ENCODE measurements at regions of chr18 and their contacts with region 1.

Region 1: GRCh38 chr18:5237723-5238370 is 40.8 kb upstream of the AKAIN1 start:
- DNase-seq: peak; percentile 89
- ATAC-seq: peak; percentile 93
- H3K4me3 Mint-ChIP-seq: peak overlapping the region; percentile 94
- H3K27ac Mint-ChIP-seq: peak overlapping the region; percentile 93
- H3K4me1 Mint-ChIP-seq: peaks cover 44% of the 10 kb centered on the region
- H3K27me3 Mint-ChIP-seq: peaks cover 1% of the 10 kb centered on the region
- CTCF ChIP-seq: no peak

Region 2: DNA sequence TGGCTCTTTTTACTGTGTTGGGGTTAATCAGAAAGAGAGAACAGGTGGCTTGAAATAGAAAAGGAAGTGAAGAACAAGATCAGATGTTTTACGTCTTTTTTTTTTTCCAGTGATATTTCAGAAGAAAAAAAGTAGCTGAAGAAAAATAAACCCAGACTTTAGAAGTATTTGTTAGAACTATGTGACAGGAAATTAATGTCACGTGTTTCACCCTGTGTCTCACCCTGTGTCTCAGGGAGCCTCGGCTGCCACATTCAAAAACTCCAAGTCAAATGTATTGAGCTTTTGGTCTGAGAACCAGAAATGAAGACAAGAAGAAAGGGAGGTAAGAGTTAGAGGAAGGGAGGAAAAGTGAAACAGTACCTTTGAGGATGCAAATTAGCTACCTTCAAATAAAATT is 78.8 kb before region 1 on chr18:
- CTCF ChIA-PET with region 1: interaction called, 5 read pairs
- POLR2A ChIA-PET with region 1: interaction called, 5 read pairs
- intact Hi-C with region 1: loop called (anchors 5 kb)
- DNase-seq: peak; percentile 18
- ATAC-seq: peak; percentile 57
- H3K4me3 Mint-ChIP-seq: peak overlapping the region; percentile 9
- H3K27ac Mint-ChIP-seq: peak overlapping the region; percentile 80
- H3K4me1 Mint-ChIP-seq: peaks cover 30% of the 10 kb centered on the region
- H3K27me3 Mint-ChIP-seq: peaks cover 1% of the 10 kb centered on the region
- CTCF ChIP-seq: no peak

Region 3: DNA sequence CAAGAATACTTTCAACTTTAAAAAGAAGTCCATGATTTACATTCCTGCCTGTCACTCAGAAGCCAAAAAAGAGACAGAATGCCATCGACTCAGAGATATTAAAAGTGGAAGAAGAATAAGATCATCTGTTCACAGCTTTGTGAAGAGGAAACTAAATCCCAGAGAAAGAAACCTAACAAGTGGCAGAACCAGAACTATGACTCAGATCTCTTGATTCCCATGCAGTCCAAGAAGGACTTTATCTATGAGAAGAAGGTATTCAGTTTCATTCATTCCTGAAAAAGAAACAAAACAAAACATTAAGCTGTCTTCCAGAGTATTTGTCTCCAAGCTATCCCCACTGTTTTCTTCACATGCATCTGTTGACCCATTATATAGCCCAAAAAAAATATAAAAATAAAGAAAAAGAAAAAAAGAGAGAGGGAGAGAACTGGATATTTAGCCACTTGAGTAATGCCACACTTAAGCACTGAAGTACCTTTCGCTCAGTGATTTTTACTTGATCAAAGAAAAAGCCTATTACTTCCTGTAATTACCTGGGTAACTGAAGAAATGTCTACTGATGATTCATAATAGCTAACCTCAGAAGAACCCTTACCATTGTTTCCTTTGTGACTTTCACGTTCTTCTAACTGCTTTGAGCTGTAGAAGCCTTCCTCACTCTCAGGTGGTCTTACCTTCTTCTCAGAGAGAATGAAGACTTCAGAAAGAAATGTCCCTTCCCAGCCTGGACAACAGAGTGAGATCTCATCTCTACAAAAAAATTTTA is 23.1 kb before region 1 on chr18:
- CTCF ChIA-PET with region 1: no interaction called
- POLR2A ChIA-PET with region 1: interaction called, 10 read pairs
- intact Hi-C with region 1: no loop called
- DNase-seq: no peak
- ATAC-seq: peak; percentile 74
- H3K4me3 Mint-ChIP-seq: no peak overlapping the region
- H3K27ac Mint-ChIP-seq: peak overlapping the region; percentile 3
- H3K4me1 Mint-ChIP-seq: peaks cover 10% of the 10 kb centered on the region
- H3K27me3 Mint-ChIP-seq: peaks cover 3% of the 10 kb centered on the region
- CTCF ChIP-seq: no peak

Region 4: DNA sequence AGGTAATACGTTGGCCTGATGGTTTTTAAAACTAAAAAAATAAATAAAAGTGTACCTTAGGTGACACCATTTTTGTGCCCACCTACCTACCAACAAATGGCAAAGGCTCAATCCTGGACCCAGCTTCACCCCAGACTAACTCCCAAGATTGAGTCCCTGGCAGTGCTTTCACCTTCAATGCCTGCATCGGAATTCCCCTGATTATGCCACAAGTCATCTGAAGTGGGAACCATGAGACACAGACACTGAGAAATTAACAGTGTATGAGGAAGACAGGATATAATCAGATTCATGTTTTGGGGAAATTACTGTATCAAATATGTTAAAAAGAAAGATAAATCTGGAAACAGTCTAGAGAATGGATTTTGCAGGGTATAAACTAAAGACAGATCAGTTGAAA is 16.1 kb after region 1 on chr18:
- CTCF ChIA-PET with region 1: no interaction called
- POLR2A ChIA-PET with region 1: interaction called, 14 read pairs
- intact Hi-C with region 1: no loop called
- DNase-seq: no peak
- ATAC-seq: no peak
- H3K4me3 Mint-ChIP-seq: no peak overlapping the region
- H3K27ac Mint-ChIP-seq: no peak overlapping the region
- H3K4me1 Mint-ChIP-seq: no peaks in the 10 kb centered on the region
- H3K27me3 Mint-ChIP-seq: peaks cover 3% of the 10 kb centered on the region
- CTCF ChIP-seq: no peak

Region 5: DNA sequence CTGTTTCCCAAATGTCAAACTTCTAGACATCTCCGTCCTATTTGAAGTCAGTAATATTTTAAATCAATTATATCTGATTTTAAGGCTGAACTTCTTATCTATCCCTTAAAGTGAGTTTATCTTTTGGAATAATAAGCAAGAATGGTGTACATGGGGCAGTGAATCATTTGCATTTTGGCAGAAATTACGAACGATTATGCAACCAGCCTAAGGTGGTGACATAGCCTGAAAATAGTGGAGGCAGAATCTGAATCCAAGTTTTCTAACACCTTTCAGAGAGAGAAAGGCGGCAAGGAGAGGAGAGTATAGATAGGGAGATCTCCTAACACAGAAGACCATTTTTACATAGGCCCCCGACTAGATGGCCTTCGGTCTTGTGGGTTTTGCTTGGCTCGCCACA is 47.0 kb after region 1 on chr18:
- CTCF ChIA-PET with region 1: no interaction called
- POLR2A ChIA-PET with region 1: interaction called, 10 read pairs
- intact Hi-C with region 1: no loop called
- DNase-seq: no peak
- ATAC-seq: no peak
- H3K4me3 Mint-ChIP-seq: no peak overlapping the region
- H3K27ac Mint-ChIP-seq: no peak overlapping the region
- H3K4me1 Mint-ChIP-seq: peaks cover 34% of the 10 kb centered on the region
- H3K27me3 Mint-ChIP-seq: no peaks in the 10 kb centered on the region
- CTCF ChIP-seq: no peak

Region 6: GRCh38 chr18:5295981-5296705 is 58.3 kb after region 1 on chr18:
- CTCF ChIA-PET with region 1: interaction called, 16 read pairs
- POLR2A ChIA-PET with region 1: interaction called, 101 read pairs
- intact Hi-C with region 1: loop called (anchors 2 kb)
- DNase-seq: peak; percentile 95
- ATAC-seq: peak; percentile 78
- H3K4me3 Mint-ChIP-seq: peak overlapping the region; percentile 83
- H3K27ac Mint-ChIP-seq: peak overlapping the region; percentile 97
- H3K4me1 Mint-ChIP-seq: peaks cover 28% of the 10 kb centered on the region
- H3K27me3 Mint-ChIP-seq: peaks cover under 1% of the 10 kb centered on the region
- CTCF ChIP-seq: no peak

Region 7: GRCh38 chr18:5318991-5319390 is 81.1 kb after region 1 on chr18:
- CTCF ChIA-PET with region 1: no interaction called
- POLR2A ChIA-PET with region 1: no interaction called
- intact Hi-C with region 1: no loop called
- DNase-seq: no peak
- ATAC-seq: no peak
- H3K4me3 Mint-ChIP-seq: no peak overlapping the region
- H3K27ac Mint-ChIP-seq: no peak overlapping the region
- H3K4me1 Mint-ChIP-seq: peaks cover 3% of the 10 kb centered on the region
- H3K27me3 Mint-ChIP-seq: no peaks in the 10 kb centered on the region
- CTCF ChIP-seq: no peak

Measured in activated CD8-positive, alpha-beta T cell treated with anti-CD3 and anti-CD28 coated beads for 36 hours (primary cell).